Posterior vena cava (tissue), 2 donors: ENCODE measurements at regions of chr1 and their contacts with region 1.

Region 1: GRCh38 chr1:11019971-11020370 is 7.5 kb downstream of the TARDBP start:
- DNase-seq: no peak

Region 2: GRCh38 chr1:12255918-12256317 is 1235.9 kb after region 1 on chr1:
- intact Hi-C with region 1: loop called in 1 of 2 experiments (anchors 5 kb)
- DNase-seq: no peak